Common myeloid progenitor, CD34-positive (primary cell): ENCODE measurements at regions of chr10 and their contacts with region 1.

Region 1: GRCh38 chr10:21495752-21496342 is 29.6 kb downstream of the SKIDA1 start:
- DNase-seq: peak; percentile 90 to 96 (median 95)
- H3K4me3 ChIP-seq: peak overlapping the region; percentile 69 to 97 (median 87)
- H3K27ac ChIP-seq: peak overlapping the region in 1 of 2 experiments; percentile 70
- H3K4me1 ChIP-seq: peaks cover 8 to 41% (median 29%) of the 10 kb centered on the region in 4 experiments
- H3K27me3 ChIP-seq: peaks cover 0 to 7% (median 0%) of the 10 kb centered on the region in 5 experiments

Region 2: GRCh38 chr10:21510241-21511074 is 14.6 kb after region 1 on chr10:
- CTCF ChIA-PET with region 1: interaction called, 51 read pairs
- POLR2A ChIA-PET with region 1: interaction called, 3 read pairs
- DNase-seq: peak in 2 of 3 donors; percentile 47 to 61
- H3K4me3 ChIP-seq: peak overlapping the region in 6 of 7 experiments; percentile 15 to 74 (median 45)
- H3K27ac ChIP-seq: no peak overlapping the region
- H3K4me1 ChIP-seq: peaks cover 4 to 37% (median 14%) of the 10 kb centered on the region in 4 experiments
- H3K27me3 ChIP-seq: no peaks in the 10 kb centered on the region

Region 3: DNA sequence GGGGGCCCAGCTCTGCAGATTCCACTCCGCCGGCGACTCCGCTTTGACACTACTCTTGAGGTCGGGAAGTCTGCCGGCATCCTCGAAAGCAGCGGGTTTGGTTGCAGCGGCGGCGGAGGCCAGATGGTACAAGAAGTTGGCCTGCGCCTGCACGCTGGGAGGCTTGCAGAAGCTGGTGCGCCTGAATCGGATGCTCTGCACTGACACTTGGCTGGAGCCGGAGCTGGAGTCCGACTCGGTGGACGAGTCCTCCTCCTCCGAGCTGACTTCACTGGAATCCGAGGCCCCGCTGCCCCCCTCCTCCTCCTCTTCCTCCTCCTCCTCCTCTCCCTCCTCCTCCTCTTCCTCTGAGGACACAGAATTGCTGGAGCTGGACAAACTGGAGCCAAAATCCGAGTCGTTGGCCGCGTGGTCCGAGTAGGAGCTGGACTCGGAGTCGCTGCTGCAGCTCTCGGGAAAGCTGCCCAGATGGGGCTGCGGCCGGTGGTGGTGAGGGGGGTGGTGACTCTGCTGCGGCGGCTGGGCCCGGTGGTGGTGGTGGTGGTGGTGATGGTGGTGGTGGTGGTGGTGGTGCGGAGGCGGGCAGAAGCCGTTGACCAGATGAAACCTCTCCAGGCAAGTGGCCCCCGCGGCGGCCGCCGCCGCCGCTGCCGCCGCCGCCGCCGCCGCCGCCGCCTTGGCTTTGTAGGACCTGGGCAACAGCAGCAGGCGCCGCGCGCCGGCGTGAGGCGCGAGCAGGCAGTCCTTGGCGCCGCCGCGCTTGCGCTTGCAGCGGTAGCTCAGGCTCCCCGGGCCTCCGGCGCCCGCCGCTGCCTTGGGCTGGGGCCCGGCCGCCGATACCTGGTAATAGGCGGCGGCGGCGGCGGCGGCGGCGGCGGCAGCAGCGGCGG is 20.6 kb after region 1 on chr10:
- CTCF ChIA-PET with region 1: interaction called, 134 read pairs
- POLR2A ChIA-PET with region 1: interaction called, 8 read pairs
- DNase-seq: peak; percentile 74 to 82 (median 78)
- H3K4me3 ChIP-seq: peak overlapping the region; percentile 45 to 90 (median 78)
- H3K27ac ChIP-seq: no peak overlapping the region
- H3K4me1 ChIP-seq: peaks cover 19 to 63% (median 44%) of the 10 kb centered on the region in 4 experiments
- H3K27me3 ChIP-seq: no peaks in the 10 kb centered on the region

Region 4: GRCh38 chr10:21533467-21534279 is 37.8 kb after region 1 on chr10 and contains the start of gene MLLT10:
- CTCF ChIA-PET with region 1: interaction called, 134 read pairs
- POLR2A ChIA-PET with region 1: interaction called, 9 read pairs
- DNase-seq: peak; percentile 96 to 99 (median 99)
- H3K4me3 ChIP-seq: peak within 1 kb of the TSS; percentile 78 to 89 (median 82)
- H3K27ac ChIP-seq: peak within 1 kb of the TSS; percentile 82 to 90
- H3K4me1 ChIP-seq: peaks cover 13 to 49% (median 34%) of the 10 kb centered on the region in 4 experiments
- H3K27me3 ChIP-seq: no peaks in the 10 kb centered on the region

Region 5: GRCh38 chr10:21724695-21725367 is 229.0 kb after region 1 on chr10:
- CTCF ChIA-PET with region 1: interaction called, 72 read pairs
- POLR2A ChIA-PET with region 1: no interaction called
- DNase-seq: peak; percentile 88 to 96 (median 95)
- H3K4me3 ChIP-seq: peak overlapping the region in 1 of 7 experiments; percentile 28
- H3K27ac ChIP-seq: no peak overlapping the region
- H3K4me1 ChIP-seq: peaks cover 12 to 28% (median 20%) of the 10 kb centered on the region in 4 experiments
- H3K27me3 ChIP-seq: no peaks in the 10 kb centered on the region

Region 6: GRCh38 chr10:21732067-21732772 is 236.4 kb after region 1 on chr10:
- CTCF ChIA-PET with region 1: interaction called, 72 read pairs
- POLR2A ChIA-PET with region 1: no interaction called
- DNase-seq: peak; percentile 79 to 84 (median 84)
- H3K4me3 ChIP-seq: no peak overlapping the region
- H3K27ac ChIP-seq: no peak overlapping the region
- H3K4me1 ChIP-seq: peaks cover 10 to 18% (median 14%) of the 10 kb centered on the region in 4 experiments
- H3K27me3 ChIP-seq: no peaks in the 10 kb centered on the region